ENCODE measurements at regions of chr11 and their contacts with region 1.

Region 1: DNA sequence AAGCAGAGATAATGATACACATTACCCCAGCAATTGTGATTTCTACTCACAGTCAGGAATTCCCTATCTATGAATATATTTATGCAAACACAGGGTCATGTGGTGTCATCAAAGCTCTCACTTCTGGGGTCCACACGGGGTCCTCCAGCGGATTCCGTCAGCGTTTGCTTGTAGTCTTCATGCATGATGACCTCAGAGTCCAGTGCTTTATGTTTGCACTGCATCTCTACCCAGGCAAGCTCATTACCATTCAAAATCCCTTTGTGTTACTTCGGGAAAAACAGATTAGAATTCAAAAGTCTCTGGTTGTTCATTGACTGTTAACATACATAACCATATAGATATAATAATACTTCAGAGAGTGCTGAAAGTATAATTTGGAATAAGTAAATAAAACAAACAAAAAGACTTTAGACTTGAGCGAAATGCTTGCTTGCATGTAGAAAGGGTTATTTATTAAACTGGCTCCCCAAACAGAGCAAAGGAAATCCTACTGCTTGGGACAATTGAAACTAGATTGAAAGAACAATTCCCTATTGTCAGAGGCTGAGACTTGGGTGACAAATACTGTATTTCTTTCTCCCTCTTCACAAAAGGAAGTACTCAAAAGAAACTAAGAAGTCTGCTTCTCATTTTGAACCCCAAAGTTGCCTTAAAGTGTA is 423.1 kb downstream of the ETS1 start:
- DNase-seq: no peak
- H3K4me3 ChIP-seq: no peak overlapping the region
- H3K27ac ChIP-seq: no peak overlapping the region
- H3K4me1 ChIP-seq: no peaks in the 10 kb centered on the region
- H3K27me3 ChIP-seq: no peaks in the 10 kb centered on the region
- CTCF ChIP-seq: no peak
- EP300 ChIP-seq: no peak
- POLR2A ChIP-seq: no peak

Region 2: GRCh38 chr11:128195057-128195751 is 31.0 kb after region 1 on chr11:
- in situ Hi-C with region 1: no loop called
- intact Hi-C with region 1: no loop called
- DNase-seq: no peak
- H3K4me3 ChIP-seq: no peak overlapping the region
- H3K27ac ChIP-seq: no peak overlapping the region
- H3K4me1 ChIP-seq: peaks cover 0 to 4% (median 0%) of the 10 kb centered on the region in 4 donors
- H3K27me3 ChIP-seq: no peaks in the 10 kb centered on the region
- CTCF ChIP-seq: no peak
- EP300 ChIP-seq: no peak
- POLR2A ChIP-seq: no peak

Region 3: DNA sequence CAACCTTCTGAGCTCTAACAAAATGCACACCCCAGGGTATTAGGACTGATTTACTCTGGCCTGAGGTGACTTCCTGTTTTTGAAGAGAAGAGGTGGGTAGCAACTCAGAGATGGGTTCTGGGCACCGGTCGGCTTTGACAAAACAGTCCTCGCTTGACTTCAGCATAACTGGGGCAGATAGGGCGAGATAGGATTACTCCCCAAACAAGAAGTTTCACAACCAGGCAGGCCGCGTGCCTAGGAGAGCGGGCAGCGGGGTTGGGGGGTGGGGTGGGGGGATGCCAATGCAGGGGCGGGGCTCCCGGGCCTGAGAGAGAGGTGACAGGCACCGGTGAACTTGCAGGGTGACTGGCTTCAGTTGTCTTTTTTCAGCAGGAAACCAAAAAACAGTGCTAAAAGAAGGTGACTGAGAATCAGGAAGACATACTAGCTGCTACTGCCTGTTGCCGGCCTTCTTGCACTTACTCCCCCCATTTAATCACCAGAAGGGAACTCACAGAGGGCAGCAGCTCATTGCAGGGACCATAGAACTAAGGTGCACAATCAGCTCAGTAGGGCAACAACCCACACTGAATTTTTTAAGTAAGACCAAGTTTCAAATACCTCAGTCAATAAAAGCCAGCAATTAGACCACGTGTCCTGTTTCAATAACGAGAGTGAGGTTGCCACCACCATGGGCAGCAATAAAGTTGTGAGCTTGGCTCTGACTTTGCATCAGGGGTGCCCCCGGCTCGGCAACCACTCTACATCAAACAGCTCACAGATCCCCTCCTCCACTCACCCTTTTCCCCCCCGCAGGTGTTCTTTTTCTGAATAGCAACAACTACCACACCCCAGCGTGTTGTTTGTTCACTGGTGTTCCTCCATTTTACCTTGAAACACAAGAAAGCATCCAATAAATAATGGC is 460.3 kb after region 1 on chr11:
- in situ Hi-C with region 1: loop called in 1 of 4 experiments (anchors 5 kb)
- intact Hi-C with region 1: no loop called
- DNase-seq: peak; percentile 58
- H3K4me3 ChIP-seq: no peak overlapping the region
- H3K27ac ChIP-seq: peak overlapping the region; percentile 41 to 55 (median 48)
- H3K4me1 ChIP-seq: peaks cover 0 to 26% (median under 1%) of the 10 kb centered on the region in 4 donors
- H3K27me3 ChIP-seq: no peaks in the 10 kb centered on the region
- CTCF ChIP-seq: no peak
- EP300 ChIP-seq: no peak
- POLR2A ChIP-seq: no peak

Region 4: DNA sequence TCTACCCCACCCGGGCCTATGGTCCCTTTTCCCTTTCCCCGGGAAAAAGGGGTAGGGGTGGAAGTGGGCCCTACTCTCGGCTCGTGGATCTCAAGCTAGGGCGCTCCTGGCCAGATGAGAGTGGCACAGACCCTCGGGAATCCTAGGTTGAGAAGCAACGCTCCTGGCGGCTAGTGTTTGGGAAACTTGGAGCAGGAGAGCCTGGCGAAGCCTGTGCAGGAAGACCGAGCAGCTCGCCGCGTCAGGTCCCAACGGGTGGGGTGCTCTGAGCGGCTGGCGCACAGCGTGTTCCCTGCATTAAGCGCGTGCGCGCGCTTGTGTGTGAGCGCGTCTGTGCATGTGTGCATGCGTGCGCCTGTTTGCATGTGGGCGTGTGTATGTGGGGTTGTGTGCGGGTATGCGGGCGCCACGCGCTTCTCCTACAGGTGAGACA is 522.5 kb after region 1 on chr11:
- in situ Hi-C with region 1: no loop called
- intact Hi-C with region 1: no loop called
- DNase-seq: peak; percentile 63
- H3K4me3 ChIP-seq: peak overlapping the region in 3 of 4 donors; percentile 2 to 31 (median 27)
- H3K27ac ChIP-seq: no peak overlapping the region
- H3K4me1 ChIP-seq: peaks cover 9 to 37% (median 23%) of the 10 kb centered on the region in 4 donors
- H3K27me3 ChIP-seq: peaks cover 90% of the 10 kb centered on the region
- CTCF ChIP-seq: no peak
- EP300 ChIP-seq: no peak
- POLR2A ChIP-seq: no peak